GM10248 (cell line): ENCODE measurements at regions of chr13 and their contacts with region 1.

Region 1: DNA sequence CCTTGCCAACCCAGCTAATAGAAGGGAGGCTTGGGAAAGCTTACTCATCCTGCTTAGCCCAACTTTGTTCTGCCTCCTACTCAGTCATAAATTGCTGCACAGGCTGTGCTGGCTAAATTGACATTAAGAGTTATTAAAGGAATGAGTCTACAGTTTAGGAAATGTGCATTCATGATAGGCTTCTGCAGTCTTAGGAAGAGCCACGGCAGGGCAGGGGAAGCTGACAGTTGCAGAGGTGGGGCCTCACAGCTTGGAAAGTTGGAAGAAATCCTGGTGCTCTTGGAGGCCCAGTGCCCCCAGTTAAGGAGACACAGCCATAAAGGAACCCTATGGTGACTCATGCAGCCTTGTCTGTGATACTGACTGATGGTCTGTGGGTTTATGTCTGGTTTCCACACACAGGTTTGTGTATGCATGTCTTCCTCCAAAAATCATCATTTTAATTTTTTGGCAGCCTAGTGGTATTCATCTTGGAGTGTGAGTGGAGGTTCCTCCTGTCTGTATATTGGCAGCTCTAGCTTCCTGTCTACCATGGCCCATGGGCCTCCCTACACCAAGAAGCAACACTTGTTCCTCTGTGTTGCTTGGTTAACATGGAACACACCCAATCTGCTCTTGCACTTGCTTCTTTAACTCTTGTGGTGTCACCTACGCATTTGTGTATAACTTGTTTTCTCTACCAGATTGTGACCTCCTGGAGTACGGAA is 135.0 kb upstream of the KL start:
- DNase-seq: no peak
- CTCF ChIP-seq: no peak

Region 2: DNA sequence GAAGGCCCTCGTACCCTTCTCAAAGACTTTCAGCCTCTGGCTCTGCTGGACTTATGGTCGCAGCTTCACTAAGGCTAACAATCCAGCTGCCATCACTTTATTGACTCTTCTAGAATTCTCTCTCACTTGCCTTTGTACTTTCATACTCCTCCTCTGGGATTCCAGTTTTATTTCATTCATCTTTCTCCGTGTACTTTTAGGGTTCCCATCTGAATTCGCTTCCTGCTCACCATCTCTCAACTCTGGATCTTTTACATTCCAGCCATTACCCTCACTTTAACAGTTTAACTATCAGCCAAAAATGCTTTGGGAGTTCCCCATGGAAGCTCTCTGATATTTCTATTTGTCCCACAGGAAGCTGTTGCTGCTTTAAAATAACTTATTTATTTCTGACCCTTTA is 14.3 kb before region 1 on chr13:
- CTCF ChIA-PET with region 1: no interaction called
- POLR2A ChIA-PET with region 1: no interaction called
- DNase-seq: no peak
- CTCF ChIP-seq: no peak

Region 3: DNA sequence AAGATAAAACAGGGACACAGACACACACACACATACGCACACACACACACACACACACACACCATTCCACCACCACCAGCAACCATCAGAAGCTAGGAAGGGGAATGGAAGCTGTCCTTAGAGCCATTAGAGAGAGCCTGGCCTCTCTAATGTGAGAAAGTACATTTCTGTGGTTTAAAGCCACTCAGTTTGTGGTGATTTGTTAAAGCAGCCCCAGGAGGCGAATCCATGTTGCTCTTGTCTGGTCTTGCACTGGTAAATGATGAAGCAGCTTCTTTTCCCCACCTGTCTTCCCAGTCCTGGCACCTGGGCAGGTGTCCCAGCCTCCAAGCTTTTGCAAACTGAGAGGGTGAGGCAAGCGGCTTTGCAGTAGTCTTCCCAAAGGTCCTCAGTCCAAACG is 16.1 kb after region 1 on chr13:
- CTCF ChIA-PET with region 1: interaction called, 12 read pairs
- POLR2A ChIA-PET with region 1: no interaction called
- DNase-seq: no peak
- CTCF ChIP-seq: no peak